Ovary (tissue), 10 donors: ENCODE measurements at regions of chr11 and their contacts with region 1.

Region 1: DNA sequence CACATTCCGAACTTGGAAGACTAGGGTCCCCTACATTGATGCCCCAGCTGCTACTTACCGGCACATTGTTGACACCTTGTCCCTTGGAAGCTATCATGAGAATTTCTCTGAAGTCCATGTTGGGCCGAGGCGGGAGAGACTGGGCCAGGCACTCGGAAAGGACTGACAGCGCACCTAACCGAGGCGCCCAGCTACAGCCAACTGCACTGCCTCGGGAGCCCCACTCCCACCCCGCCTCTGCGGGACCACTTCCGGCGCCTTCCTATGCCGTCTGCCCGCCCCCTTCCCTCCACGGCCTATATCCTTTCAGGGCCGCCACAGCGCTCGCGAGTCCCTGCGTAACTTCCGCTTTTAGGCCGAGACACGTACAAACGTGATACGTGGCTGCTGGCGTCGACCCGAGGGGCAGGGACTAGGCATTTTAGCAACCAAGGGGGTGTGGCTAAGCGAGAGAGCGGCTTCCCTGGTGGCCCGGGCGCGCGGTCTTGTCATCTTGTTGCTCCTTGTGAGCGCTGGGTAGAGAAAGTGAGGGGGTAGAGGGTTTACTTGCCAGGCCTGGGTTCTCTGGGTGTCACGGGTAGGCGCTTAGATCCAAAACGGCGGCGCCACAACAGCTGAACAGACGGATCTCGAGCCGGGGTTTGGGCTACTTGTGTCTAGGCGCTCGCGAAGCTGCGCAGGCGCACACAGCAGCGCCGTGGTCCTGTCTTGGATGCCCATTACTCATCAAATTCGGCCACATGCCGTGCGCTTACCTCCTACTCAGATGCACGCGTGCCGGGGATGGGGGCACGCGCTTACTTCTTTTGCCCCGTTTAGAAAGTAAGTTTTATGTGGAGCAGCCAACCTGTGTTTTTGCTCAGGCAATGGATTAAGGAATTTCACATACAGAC is at the start of gene SPTY2D1:
- DNase-seq: peak; percentile 99 to 100 (median 99)
- H3K4me3 ChIP-seq: peak within 1 kb of the TSS; percentile 66
- H3K27ac ChIP-seq: peak within 1 kb of the TSS; percentile 84 to 89
- H3K4me1 ChIP-seq: peaks cover 3% of the 10 kb centered on the region
- H3K27me3 ChIP-seq: no peaks in the 10 kb centered on the region
- CTCF ChIP-seq: peak in 1 of 3 donors; percentile 36
- EP300 ChIP-seq: peak; percentile 39
- POLR2A ChIP-seq: peak; percentile 88
- total RNA-seq, gene SPTY2D1: 14.0 to 24.9 (median 19.0) TPM

Region 2: GRCh38 chr11:18575361-18575760 is 59.0 kb before region 1 on chr11:
- intact Hi-C with region 1: no loop called
- DNase-seq: no peak
- H3K4me3 ChIP-seq: no peak overlapping the region
- H3K27ac ChIP-seq: no peak overlapping the region
- H3K4me1 ChIP-seq: no peaks in the 10 kb centered on the region
- H3K27me3 ChIP-seq: no peaks in the 10 kb centered on the region
- CTCF ChIP-seq: no peak
- EP300 ChIP-seq: no peak
- POLR2A ChIP-seq: no peak

Region 3: GRCh38 chr11:18594999-18595749 is 39.2 kb before region 1 on chr11:
- intact Hi-C with region 1: loop called in 1 of 4 experiments (anchors 5 kb)
- DNase-seq: no peak
- H3K4me3 ChIP-seq: no peak overlapping the region
- H3K27ac ChIP-seq: no peak overlapping the region
- H3K4me1 ChIP-seq: no peaks in the 10 kb centered on the region
- H3K27me3 ChIP-seq: no peaks in the 10 kb centered on the region
- CTCF ChIP-seq: no peak
- EP300 ChIP-seq: no peak
- POLR2A ChIP-seq: no peak

Region 4: GRCh38 chr11:18706330-18707243 is 72.2 kb after region 1 on chr11:
- intact Hi-C with region 1: loop called in 2 of 4 experiments (anchors 5 to 10 kb)
- DNase-seq: peak; percentile 79 to 85 (median 82)
- H3K4me3 ChIP-seq: peak overlapping the region; percentile 71
- H3K27ac ChIP-seq: peak overlapping the region; percentile 31 to 52
- H3K4me1 ChIP-seq: peaks cover 9% of the 10 kb centered on the region
- H3K27me3 ChIP-seq: no peaks in the 10 kb centered on the region
- CTCF ChIP-seq: no peak
- EP300 ChIP-seq: no peak
- POLR2A ChIP-seq: no peak

Region 5: DNA sequence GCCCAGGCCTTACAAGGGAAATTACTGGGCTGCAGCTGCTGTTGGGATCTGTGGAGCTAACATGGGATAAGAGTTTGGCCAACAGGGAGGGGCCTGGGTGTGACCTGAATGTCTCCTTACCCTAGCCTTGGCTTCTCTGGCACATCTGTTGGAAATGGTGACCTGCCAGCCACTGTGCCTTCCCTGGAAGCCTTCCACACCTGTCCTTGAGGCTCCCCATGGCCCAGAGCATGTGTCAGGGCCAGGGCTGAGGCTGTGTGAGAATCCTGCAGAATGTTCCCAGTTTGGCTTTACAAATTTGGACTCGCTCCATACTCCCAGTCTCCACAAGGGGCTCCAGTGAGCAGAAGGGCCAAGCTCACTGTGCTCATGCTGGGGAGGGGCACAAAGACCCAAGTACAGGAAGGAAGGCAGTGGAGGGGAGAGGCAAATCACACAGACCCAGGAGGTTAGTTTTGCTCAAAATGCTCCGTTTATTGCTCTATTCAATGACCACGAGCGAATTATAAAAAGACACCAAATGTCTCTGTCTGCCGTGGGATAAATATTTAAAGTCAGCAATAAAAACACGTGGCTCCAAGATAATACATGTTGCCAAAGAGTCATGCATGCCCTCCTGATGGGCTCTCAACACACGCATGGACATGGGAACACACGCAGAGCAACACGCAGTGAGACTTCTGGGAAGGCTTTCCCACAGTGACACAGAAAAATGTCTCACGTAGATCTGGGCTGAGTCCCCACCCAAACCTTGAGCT is 93.3 kb after region 1 on chr11:
- intact Hi-C with region 1: loop called in 1 of 4 experiments (anchors 5 kb)
- DNase-seq: peak; percentile 49 to 62 (median 51)
- H3K4me3 ChIP-seq: no peak overlapping the region
- H3K27ac ChIP-seq: no peak overlapping the region
- H3K4me1 ChIP-seq: peaks cover 6% of the 10 kb centered on the region
- H3K27me3 ChIP-seq: no peaks in the 10 kb centered on the region
- CTCF ChIP-seq: peak; percentile 29 to 62 (median 43)
- EP300 ChIP-seq: no peak
- POLR2A ChIP-seq: no peak